HCT116 (cell line): ENCODE measurements at regions of chr14 and their contacts with region 1.

Region 1: GRCh38 chr14:22432348-22432976 is 156.6 kb downstream of the DAD1 start:
- DNase-seq: peak; percentile 13
- ATAC-seq: 0 out of 2 replicates have a peak, but pooled peaks have one; percentile 38
- H3K4me3 ChIP-seq: no peak overlapping the region
- H3K27ac ChIP-seq: no peak overlapping the region
- H3K4me1 ChIP-seq: peaks cover 7 to 12% of the 10 kb centered on the region in 2 experiments; a peak in 2 of 4 replicates
- H3K27me3 ChIP-seq: peaks cover 76% of the 10 kb centered on the region
- CTCF ChIP-seq: no peak
- POLR2A ChIP-seq: no peak
- RAD21 ChIP-seq: no peak

Region 2: DNA sequence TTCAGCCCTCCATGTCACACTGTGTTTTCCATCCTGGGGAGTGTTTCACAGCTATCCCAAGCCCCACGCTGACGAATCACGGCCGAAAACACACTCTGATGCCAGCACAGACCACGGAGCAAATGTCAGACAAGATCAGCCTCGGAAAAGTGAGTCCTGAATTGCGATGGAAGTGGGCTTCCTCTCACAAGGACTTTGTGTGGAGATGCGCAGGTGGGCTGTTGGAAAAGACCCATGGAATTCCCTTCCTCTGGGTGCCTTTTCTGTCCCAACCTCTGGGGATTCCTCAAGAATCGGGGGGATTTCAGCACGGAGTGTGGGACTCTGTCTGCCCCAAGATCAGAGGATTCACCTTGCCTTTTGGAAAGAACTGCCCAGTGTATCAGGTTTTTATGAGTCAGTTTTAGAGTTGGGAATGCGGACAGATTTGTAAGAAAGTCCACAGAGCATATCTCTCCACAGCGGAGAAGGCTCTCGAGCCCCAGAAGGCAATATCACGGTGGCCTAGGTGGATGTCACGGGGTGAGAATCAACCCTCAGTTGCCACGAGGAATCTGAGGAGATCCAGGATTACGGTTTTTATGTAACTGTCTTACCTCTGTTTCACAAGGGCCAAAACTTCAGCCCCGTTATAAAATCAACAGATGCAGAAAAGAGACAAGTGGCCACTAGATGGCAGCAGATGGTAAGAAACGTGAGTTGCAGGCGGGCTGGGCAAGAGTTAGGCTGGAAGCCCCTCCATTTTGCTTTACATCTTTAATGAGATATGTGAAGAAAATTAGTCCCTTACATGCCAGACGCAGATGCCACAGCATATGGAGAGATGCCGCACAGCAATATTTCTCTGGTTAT is 45.3 kb before region 1 on chr14:
- CTCF ChIA-PET with region 1: interaction called, 3 read pairs
- POLR2A ChIA-PET with region 1: no interaction called
- RAD21 ChIA-PET with region 1: no interaction called
- intact Hi-C with region 1: loop called (anchors 5 kb)
- DNase-seq: peak; percentile 53
- ATAC-seq: peak; percentile 75
- H3K4me3 ChIP-seq: no peak overlapping the region
- H3K27ac ChIP-seq: no peak overlapping the region
- H3K4me1 ChIP-seq: no peaks in the 10 kb centered on the region
- H3K27me3 ChIP-seq: peaks cover 83% of the 10 kb centered on the region
- CTCF ChIP-seq: peak; percentile 64 to 89 (median 66)
- POLR2A ChIP-seq: no peak
- RAD21 ChIP-seq: peak; percentile 77